ENCODE measurements at regions of chr12 and their contacts with region 1.

Region 1: DNA sequence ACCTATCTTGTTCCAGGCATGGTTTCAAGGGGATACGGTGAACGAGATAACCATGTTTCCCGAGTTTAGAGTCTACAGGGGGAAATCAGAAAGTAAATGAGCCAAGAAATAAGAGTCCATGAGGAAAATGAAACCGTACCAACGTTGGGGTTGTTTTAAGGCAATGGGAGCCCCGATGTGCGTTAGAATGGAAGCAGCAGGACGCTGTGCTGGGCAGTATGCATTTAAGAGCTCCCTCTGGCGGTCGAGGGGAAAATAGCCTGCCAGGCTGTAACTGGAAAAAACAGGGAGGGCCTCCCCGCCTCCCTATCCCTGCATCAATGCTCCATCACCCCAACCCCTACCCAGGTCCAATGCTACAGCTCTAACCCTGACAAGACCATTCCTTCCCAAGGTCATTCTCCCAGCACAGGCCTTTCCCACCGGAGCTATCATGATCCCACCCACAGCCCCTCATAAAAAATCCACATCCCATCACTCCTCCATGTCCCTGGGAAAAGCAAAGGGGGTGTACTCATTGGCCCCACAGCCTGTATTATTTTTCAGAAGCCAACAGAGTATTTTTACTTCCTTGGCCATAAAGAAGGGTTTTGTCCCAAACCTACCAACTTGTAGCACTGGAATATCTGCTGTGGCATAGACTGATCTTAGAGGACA is 226.3 kb upstream of the NOS1 start:
- DNase-seq: no peak
- H3K4me3 ChIP-seq: no peak overlapping the region
- H3K27ac ChIP-seq: no peak overlapping the region
- H3K4me1 ChIP-seq: peaks cover 0 to 17% (median 10%) of the 10 kb centered on the region in 3 donors
- H3K27me3 ChIP-seq: peaks cover 0 to 29% (median 0%) of the 10 kb centered on the region in 4 donors
- CTCF ChIP-seq: peak; percentile 49 to 83 (median 76)
- POLR2A ChIP-seq: no peak

Region 2: DNA sequence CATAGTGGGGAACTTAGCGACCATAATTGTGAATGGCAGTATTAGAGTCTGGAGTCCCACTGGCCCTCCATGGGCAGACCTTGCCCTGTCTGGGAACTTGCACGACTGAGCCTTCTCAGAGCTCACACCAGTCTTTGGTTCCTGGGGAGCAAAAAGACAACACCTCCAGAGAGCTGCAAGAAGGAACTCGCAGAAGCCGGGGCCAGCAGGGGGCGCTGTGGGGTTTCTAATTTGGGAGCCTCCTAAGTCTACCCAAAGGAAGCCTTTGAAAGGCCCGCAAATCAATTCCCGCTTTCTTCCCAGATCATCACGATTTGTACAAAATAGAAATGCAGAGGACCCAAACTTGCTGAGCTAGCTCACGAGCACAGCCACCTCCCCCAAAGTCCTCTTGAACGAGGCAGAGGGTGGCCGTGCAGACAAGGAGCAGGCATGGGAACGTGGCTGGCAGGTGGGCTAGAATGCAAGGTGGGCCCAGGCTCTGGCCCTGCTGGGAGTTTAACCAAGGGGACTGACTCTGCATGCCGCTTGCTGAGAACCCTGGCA is 351.2 kb before region 1 on chr12:
- intact Hi-C with region 1: loop called (anchors 10 kb)
- DNase-seq: no peak
- H3K4me3 ChIP-seq: no peak overlapping the region
- H3K27ac ChIP-seq: no peak overlapping the region
- H3K4me1 ChIP-seq: no peaks in the 10 kb centered on the region
- H3K27me3 ChIP-seq: peaks cover 0 to 50% (median 0%) of the 10 kb centered on the region in 4 donors
- CTCF ChIP-seq: peak; percentile 34 to 81 (median 68)
- POLR2A ChIP-seq: no peak